Prostate gland (tissue), 2 donors: ENCODE measurements at regions of chrX and their contacts with region 1.

Region 1: GRCh38 chrX:101415180-101416145 is 7.4 kb downstream of the HNRNPH2 start:
- DNase-seq: peak; percentile 28
- H3K4me3 ChIP-seq: no peak overlapping the region
- H3K27ac ChIP-seq: peak overlapping the region; percentile 83
- H3K4me1 ChIP-seq: no peaks in the 10 kb centered on the region
- H3K27me3 ChIP-seq: no peaks in the 10 kb centered on the region
- CTCF ChIP-seq: peak; percentile 41 to 77 (median 65)
- POLR2A ChIP-seq: no peak

Region 2: DNA sequence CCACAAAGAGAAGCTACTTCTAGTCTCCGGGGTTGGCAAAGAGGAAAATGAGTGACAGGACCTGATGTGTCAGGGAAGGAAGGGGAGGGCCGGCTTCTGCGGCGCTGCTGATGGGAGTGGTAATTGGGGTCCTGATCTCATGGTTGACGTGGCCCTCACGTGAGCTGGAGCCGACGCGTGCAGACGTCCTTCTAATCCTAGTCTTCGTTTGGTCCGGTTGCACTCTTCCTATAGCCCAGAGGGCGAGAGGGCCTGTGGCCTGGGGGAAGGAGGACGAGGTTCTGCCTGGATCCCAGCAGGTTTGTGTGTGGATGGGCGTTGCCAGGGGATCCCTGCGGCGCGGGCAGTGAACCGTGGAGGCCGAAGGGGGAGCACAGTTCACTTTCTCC is 134.9 kb after region 1 on chrX and contains the start of gene ARMCX1:
- intact Hi-C with region 1: loop called (anchors 5 kb)
- DNase-seq: peak; percentile 60
- H3K4me3 ChIP-seq: peak within 1 kb of the TSS; percentile 39 to 45
- H3K27ac ChIP-seq: peak within 1 kb of the TSS; percentile 80 to 84
- H3K4me1 ChIP-seq: no peaks in the 10 kb centered on the region
- H3K27me3 ChIP-seq: no peaks in the 10 kb centered on the region
- CTCF ChIP-seq: no peak
- POLR2A ChIP-seq: peak; percentile 55
- total RNA-seq, gene ARMCX1: 23.5 to 41.3 TPM

Region 3: DNA sequence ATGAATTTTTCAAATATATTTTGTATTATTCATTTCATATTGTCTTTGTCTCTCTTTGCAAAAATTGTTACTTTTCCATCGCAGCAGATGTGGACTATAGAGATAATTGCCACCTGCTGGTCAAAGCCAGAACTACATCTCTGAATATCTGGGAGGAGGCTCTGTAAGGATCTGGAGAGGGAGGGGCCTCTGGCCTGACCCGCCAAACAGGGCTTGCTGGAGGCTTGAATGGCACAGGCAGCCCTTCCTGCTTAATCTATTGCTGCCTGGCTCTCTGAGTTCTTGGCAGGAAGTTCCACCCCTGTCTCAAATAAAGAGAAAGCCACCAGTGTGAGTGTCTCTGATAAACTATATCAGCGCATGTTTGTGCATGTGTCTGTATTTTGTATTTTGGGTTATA is 383.9 kb after region 1 on chrX:
- intact Hi-C with region 1: loop called (anchors 5 kb)
- DNase-seq: peak; percentile 88
- H3K4me3 ChIP-seq: no peak overlapping the region
- H3K27ac ChIP-seq: no peak overlapping the region
- H3K4me1 ChIP-seq: no peaks in the 10 kb centered on the region
- H3K27me3 ChIP-seq: no peaks in the 10 kb centered on the region
- CTCF ChIP-seq: peak; percentile 50 to 79 (median 66)
- POLR2A ChIP-seq: no peak